Panc1 (cell line): ENCODE measurements at regions of chr5 and their contacts with region 1.

Region 1: DNA sequence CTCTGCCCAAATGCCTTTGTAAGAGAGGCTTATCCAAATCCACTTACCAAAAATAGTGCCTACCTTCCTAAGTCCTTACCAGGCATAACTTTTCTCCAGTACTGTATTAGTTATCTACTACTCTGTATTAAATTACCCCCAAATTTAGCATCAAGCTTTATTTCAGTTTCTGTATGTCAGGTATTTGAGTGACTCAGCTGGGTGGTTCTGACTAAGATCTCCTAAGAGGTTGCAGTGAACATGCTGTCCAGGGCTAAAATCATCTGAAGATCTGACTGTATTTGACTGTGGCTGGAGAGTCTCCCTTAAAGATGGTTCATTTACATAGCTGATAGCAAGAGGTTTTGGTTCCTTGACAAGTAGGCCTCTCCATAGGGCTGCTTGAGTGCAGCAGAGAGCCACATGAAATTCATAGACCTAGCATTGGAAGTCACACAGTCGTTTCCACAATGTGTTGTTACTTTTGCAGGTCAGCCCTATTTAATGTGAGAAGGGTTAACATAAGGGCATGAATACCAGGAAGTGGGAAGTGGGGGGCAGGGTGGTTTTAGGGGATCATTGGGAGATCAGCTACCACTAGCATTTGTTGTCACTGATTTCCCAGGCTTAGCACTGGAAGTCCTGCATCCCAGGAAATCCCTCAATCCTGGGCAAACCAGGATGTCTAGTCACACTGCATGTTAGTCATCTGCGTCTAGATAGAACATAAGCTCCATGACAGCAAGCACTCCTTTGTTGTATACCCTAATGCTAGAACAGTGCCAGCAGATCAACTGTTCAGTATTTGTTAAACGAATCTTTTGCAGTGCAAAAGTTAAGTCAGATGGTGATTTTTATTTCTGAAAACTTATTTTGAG is 2.0 kb upstream of the ZNF622 start:
- DNase-seq: peak; percentile 66
- ATAC-seq: no peak
- H3K4me3 ChIP-seq: peak overlapping the region; percentile 94 to 96; a peak in 2 of 4 replicates
- H3K27ac ChIP-seq: no peak overlapping the region; the same call in 1 of the 2 replicates
- H3K4me1 ChIP-seq: peaks cover 20% of the 10 kb centered on the region
- H3K27me3 ChIP-seq: no peaks in the 10 kb centered on the region
- CTCF ChIP-seq: no peak

Region 2: DNA sequence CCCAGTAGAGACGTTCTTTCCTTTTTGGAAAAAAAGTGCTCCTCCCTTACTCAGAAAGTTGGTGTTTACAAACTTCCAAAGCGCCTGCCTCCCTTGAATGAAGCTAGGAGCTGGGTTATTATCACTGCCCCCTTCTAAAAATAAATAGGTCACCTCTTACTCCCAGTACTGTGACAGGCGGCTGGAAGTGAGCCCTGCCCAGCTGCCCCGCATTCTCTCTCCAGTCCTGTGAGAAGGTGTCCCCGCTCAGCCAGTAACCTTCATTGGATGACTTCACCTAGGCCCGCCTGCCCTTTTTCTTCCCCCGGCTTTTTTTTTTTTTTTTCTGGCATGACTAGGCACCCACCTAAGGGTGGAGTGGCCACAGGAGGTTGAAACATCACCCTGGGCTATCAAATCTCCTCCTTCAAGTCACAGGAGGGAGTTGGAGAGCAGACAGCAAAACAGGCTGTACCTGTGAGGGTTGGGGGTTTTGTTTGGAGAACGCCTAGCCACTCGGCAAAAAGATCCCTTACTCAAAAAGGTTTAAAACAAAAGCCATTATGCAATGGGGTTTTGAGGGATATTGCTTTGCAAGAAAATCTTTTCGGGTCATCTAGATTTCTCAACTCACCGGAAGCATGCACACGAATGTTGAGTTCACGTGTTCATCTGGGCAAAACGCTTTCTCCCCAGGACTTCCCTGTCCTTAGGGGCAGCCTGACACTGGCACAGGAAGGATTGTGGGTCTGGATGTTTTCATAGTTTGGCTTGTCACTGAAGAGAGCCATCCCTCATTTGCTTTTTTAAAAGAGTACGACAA is 41.3 kb after region 1 on chr5:
- CTCF ChIA-PET with region 1: no interaction called
- POLR2A ChIA-PET with region 1: interaction called, 11 read pairs
- in situ Hi-C with region 1: no loop called
- intact Hi-C with region 1: no loop called
- DNase-seq: no peak
- ATAC-seq: no peak
- H3K4me3 ChIP-seq: no peak overlapping the region
- H3K27ac ChIP-seq: no peak overlapping the region
- H3K4me1 ChIP-seq: no peaks in the 10 kb centered on the region
- H3K27me3 ChIP-seq: 0 out of 2 replicates have a peak, but pooled peaks cover 3% of the 10 kb centered on the region
- CTCF ChIP-seq: no peak